ENCODE measurements at regions of chr1 and their contacts with region 1.

Region 1: GRCh38 chr1:207672522-207673130 is 27.7 kb downstream of the CR1L start:
- DNase-seq: peak; percentile 86
- H3K4me3 Mint-ChIP-seq: no peak overlapping the region
- H3K27ac Mint-ChIP-seq: no peak overlapping the region
- H3K4me1 Mint-ChIP-seq: peaks cover 12% of the 10 kb centered on the region
- H3K27me3 Mint-ChIP-seq: peaks cover 75% of the 10 kb centered on the region
- CTCF ChIP-seq: peak; percentile 90

Region 2: DNA sequence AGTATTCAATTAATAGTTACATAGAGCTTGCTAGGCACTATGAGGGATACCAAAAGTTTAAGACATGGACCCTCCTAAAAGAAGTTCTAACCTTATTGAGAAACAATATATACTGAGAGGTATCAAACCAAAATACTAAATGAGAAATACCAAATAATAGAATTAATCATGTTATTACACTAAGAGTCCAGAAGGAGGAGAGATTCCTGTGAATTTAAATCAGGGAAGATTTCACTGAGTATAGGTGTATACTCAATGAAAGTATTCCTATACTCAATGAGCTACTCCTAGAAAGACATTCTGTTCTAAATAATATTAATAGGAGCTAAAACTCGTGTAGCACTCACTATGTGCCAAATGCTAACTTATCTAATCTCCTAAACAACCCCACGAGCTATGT is 18.3 kb before region 1 on chr1:
- CTCF ChIA-PET with region 1: interaction called, 18 read pairs
- POLR2A ChIA-PET with region 1: no interaction called
- intact Hi-C with region 1: no loop called
- DNase-seq: no peak
- H3K4me3 Mint-ChIP-seq: no peak overlapping the region
- H3K27ac Mint-ChIP-seq: no peak overlapping the region
- H3K4me1 Mint-ChIP-seq: no peaks in the 10 kb centered on the region
- H3K27me3 Mint-ChIP-seq: peaks cover 15% of the 10 kb centered on the region
- CTCF ChIP-seq: peak; percentile 28

Region 3: GRCh38 chr1:207779008-207779407 is 106.4 kb after region 1 on chr1:
- CTCF ChIA-PET with region 1: no interaction called
- POLR2A ChIA-PET with region 1: no interaction called
- intact Hi-C with region 1: no loop called
- DNase-seq: no peak
- H3K4me3 Mint-ChIP-seq: no peak overlapping the region
- H3K27ac Mint-ChIP-seq: no peak overlapping the region
- H3K4me1 Mint-ChIP-seq: peaks cover 4% of the 10 kb centered on the region
- H3K27me3 Mint-ChIP-seq: no peaks in the 10 kb centered on the region
- CTCF ChIP-seq: no peak